GM23248 (cell line): ENCODE measurements at regions of chr5 and their contacts with region 1.

Region 1: GRCh38 chr5:32076699-32077695 is 97.1 kb downstream of the GOLPH3 start:
- DNase-seq: peak; percentile 70
- H3K4me3 ChIP-seq: no peak overlapping the region
- H3K27ac ChIP-seq: no peak overlapping the region
- H3K4me1 ChIP-seq: no peaks in the 10 kb centered on the region
- H3K27me3 ChIP-seq: no peaks in the 10 kb centered on the region; the same call in none of the 2 replicates

Region 2: GRCh38 chr5:30874241-30875034 is 1202.6 kb before region 1 on chr5:
- in situ Hi-C with region 1: no loop called
- DNase-seq: no peak
- H3K4me3 ChIP-seq: no peak overlapping the region
- H3K27ac ChIP-seq: no peak overlapping the region
- H3K4me1 ChIP-seq: no peaks in the 10 kb centered on the region
- H3K27me3 ChIP-seq: no peaks in the 10 kb centered on the region

Region 3: GRCh38 chr5:31839005-31839404 is 238.0 kb before region 1 on chr5:
- in situ Hi-C with region 1: loop called (anchors 5 kb)
- DNase-seq: no peak
- H3K4me3 ChIP-seq: no peak overlapping the region
- H3K27ac ChIP-seq: no peak overlapping the region
- H3K4me1 ChIP-seq: no peaks in the 10 kb centered on the region
- H3K27me3 ChIP-seq: peaks cover 31% of the 10 kb centered on the region